HCT116 (cell line): ENCODE measurements at regions of chr9 and their contacts with region 1.

Region 1: DNA sequence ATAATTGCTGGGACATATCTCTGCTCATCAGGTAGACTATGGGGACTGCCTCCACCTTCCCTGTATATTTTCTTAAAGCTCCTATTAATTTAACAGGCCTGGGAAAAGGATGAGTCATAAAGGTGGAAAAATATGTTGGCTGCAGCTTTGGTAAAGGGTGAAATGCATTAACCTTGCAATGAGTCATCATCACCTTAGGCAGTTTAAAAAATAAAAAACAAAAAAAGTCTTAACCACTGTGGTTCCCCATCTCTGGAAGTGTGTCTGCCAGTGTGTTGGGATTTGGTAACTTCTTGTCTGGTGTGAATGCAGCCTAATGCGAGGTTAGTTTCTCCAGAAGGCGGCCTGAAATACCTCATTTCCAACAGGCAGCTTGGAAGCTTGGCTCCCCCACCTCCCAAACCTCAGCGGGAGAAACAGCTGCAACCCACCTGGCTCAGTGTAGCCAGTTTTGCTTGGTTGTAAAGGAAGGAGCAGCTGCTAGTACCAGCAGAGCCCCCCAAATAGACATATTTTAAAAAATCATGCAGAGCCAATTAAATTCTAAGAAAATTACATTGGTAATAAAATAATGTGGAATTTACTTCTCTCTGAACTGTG is 265.4 kb upstream of the GAS1 start:
- DNase-seq: peak; percentile 4
- ATAC-seq: 0 out of 2 replicates have a peak, but pooled peaks have one; percentile 36
- H3K4me3 ChIP-seq: no peak overlapping the region
- H3K27ac ChIP-seq: no peak overlapping the region
- H3K4me1 ChIP-seq: peaks cover 9% of the 10 kb centered on the region in 2 experiments
- H3K27me3 ChIP-seq: peaks cover 56% of the 10 kb centered on the region
- CTCF ChIP-seq: no peak
- POLR2A ChIP-seq: no peak
- RAD21 ChIP-seq: no peak

Region 2: GRCh38 chr9:86721843-86722711 is 490.6 kb before region 1 on chr9:
- CTCF ChIA-PET with region 1: no interaction called
- POLR2A ChIA-PET with region 1: no interaction called
- RAD21 ChIA-PET with region 1: no interaction called
- intact Hi-C with region 1: no loop called
- DNase-seq: no peak
- ATAC-seq: no peak
- H3K4me3 ChIP-seq: no peak overlapping the region
- H3K27ac ChIP-seq: no peak overlapping the region
- H3K4me1 ChIP-seq: peaks cover 0 to 15% of the 10 kb centered on the region in 2 experiments; a peak in 1 of 4 replicates
- H3K27me3 ChIP-seq: peaks cover 39% of the 10 kb centered on the region
- CTCF ChIP-seq: no peak
- POLR2A ChIP-seq: no peak
- RAD21 ChIP-seq: no peak

Region 3: DNA sequence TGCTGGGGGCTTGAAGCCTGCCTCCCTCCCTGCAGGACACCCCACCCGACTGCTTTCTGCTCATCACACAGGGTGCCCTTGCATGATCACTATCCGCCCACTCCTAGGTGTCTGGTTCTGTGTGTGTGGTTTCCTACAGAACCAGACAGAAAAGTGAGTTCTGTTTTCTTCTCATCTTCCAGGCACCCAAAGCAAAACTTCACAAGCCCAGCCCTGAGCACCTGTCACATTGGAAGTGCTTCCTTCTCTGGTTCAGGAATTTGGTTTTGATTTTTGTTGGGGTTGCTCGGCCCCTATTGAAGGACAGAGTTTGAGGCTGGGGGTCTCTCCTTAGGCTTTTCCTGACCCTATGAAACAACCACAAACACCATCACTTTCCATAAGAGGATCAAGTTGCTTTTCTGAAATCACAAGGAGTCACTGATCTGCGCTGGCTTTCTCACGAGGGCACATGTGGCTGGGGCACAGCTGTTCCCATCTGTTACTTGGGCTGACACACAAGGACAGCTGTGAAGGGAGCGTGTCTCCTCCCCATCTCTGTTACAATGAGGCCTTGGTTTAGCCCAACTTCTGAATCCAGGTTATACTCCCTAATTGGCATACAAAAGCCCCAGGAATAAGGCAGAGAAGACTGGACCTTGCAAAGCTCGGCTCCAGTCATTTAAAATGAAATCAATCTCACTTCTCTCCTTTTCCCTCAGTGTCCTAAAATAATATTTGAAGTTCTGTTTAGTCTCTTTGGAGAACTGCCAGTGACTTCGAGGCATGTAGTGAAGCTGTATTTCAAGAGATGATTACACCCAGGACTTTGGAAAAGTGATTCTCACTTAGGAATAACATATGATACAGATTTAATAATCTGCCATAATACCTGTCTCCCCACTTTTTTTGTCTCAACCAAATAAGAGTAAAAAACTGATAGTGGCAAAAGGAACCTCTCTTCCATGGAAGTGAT is 52.2 kb before region 1 on chr9:
- CTCF ChIA-PET with region 1: no interaction called
- POLR2A ChIA-PET with region 1: no interaction called
- RAD21 ChIA-PET with region 1: no interaction called
- intact Hi-C with region 1: loop called (anchors 5 kb)
- DNase-seq: no peak
- ATAC-seq: no peak
- H3K4me3 ChIP-seq: no peak overlapping the region
- H3K27ac ChIP-seq: no peak overlapping the region
- H3K4me1 ChIP-seq: no peaks in the 10 kb centered on the region
- H3K27me3 ChIP-seq: peaks cover 9% of the 10 kb centered on the region
- CTCF ChIP-seq: no peak
- POLR2A ChIP-seq: no peak
- RAD21 ChIP-seq: no peak

Region 4: DNA sequence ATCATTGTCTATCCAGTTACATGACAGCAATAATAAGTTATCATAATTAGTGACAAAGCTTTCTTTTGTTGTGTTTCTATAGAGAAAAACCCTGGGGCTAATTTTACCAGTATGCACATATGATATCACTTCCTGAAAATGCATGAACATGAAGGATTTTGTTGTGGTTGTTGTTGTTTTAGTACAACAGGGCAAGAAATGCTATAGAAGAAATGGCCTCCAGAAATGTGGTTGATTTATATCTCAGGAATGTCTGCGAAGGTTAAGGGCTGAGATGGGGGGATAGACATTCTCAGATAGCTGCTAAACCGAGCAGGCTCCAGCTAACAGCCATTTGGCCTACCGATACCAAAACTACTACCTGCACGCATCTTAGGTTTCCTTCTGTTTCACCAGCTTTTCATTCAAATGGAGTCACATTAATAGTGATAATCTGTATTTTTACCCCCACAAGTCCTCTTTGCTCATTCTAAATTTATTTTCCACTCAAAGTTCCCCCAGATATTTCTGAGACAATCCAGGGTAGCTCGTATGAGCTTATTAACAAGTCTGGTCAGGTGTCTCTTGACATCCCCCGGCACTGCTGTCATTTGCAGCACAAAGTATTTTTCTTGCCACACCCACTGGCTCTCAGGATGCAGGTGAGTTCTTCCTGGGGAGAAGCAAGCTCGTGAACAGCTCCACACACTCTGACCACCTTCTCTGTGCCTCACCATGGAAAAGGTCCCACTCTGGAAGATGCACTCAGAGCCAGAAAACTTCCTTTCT is 32.9 kb before region 1 on chr9:
- CTCF ChIA-PET with region 1: no interaction called
- POLR2A ChIA-PET with region 1: no interaction called
- RAD21 ChIA-PET with region 1: no interaction called
- intact Hi-C with region 1: loop called (anchors 5 kb)
- DNase-seq: no peak
- ATAC-seq: no peak
- H3K4me3 ChIP-seq: no peak overlapping the region
- H3K27ac ChIP-seq: no peak overlapping the region
- H3K4me1 ChIP-seq: no peaks in the 10 kb centered on the region
- H3K27me3 ChIP-seq: peaks cover 10% of the 10 kb centered on the region
- CTCF ChIP-seq: no peak
- POLR2A ChIP-seq: no peak
- RAD21 ChIP-seq: no peak

Region 5: GRCh38 chr9:87270221-87270847 is 57.7 kb after region 1 on chr9:
- CTCF ChIA-PET with region 1: no interaction called
- POLR2A ChIA-PET with region 1: no interaction called
- RAD21 ChIA-PET with region 1: no interaction called
- intact Hi-C with region 1: no loop called
- DNase-seq: no peak
- ATAC-seq: no peak
- H3K4me3 ChIP-seq: no peak overlapping the region
- H3K27ac ChIP-seq: no peak overlapping the region
- H3K4me1 ChIP-seq: no peaks in the 10 kb centered on the region
- H3K27me3 ChIP-seq: peaks cover 51% of the 10 kb centered on the region
- CTCF ChIP-seq: no peak
- POLR2A ChIP-seq: no peak
- RAD21 ChIP-seq: no peak